Dendritic cell treated with granulocyte-macrophage colony-stimulating factor and Interleukin-4, amounts not matched to agents 40 ng/mL and 50 ng/mL, for 4 days (primary cell): ENCODE measurements at regions of chr10 and their contacts with region 1.

Region 1: GRCh38 chr10:13816195-13816926 is 229.6 kb downstream of the PRPF18 start:
- H3K4me3 Mint-ChIP-seq: no peak overlapping the region
- H3K27ac Mint-ChIP-seq: no peak overlapping the region
- H3K4me1 Mint-ChIP-seq: peaks cover 5% of the 10 kb centered on the region
- H3K27me3 Mint-ChIP-seq: peaks cover 57% of the 10 kb centered on the region

Region 2: DNA sequence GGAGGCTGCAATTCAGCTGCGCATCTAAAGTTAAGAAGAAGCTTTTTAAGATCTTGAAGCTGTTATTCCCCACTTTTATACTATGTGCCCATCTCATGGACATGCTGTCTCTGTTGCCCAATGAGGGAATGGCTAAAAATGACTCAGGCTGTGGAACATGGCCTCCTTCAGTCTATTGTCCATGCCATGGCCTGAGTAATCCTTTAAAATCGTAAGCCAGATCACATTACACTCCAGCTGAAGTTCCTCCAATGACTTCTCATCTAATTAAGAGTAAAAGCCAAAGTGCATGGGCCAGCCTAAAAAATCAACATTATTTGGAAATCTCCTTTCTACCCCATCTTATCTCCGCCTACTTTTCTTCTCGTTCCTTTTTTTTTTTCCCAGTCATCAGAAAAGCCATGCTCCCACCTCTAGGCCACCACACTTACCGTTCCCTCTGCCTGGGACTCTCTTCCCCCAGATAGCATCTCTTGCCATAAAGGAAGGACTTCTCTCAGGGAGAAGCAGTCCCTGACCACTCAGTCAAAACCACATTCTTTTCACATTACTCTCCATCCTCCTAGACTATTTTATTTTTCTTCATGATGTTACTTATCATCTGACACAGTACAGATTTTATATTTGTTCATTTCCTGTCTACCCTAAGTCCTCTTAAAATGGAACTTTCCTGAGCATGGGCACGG is 107.8 kb after region 1 on chr10:
- intact Hi-C with region 1: no loop called
- H3K4me3 Mint-ChIP-seq: no peak overlapping the region
- H3K27ac Mint-ChIP-seq: no peak overlapping the region
- H3K4me1 Mint-ChIP-seq: peaks cover 23% of the 10 kb centered on the region
- H3K27me3 Mint-ChIP-seq: peaks cover 62% of the 10 kb centered on the region

Region 3: DNA sequence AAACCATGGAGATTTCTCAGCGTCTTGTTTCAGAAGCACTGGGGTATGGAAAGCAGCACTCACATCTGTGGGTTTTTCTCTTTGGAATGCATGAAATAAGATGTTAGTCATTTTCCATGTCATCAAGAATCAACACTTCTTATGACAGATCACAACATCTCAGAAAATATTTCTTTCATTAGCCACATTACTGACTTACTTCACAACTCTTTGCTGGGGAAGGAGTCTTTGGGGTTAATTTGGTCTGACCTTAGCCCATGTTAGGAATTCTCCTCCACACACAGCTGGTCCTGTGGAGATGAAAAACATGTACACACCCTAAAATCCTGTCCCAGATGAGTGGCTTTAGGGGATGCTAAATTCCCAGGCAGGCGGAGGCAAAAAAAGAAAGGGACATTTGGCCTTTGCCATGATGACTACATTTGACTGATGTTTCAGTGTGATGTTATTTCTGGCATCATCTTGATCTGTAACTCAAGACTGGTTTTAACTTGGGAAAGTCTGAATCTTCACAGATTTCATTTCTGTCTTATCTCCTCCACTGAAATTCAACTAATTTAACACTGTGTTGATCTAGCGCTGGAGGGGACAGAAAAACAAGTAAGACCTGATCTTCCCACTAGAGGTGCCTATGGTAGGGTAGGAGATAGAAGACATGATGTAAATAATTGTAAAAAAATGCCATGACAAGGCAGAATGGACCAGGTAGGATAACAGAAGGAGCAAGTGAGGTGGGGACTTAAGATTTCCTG is 133.7 kb after region 1 on chr10:
- intact Hi-C with region 1: loop called (anchors 10 kb)
- H3K4me3 Mint-ChIP-seq: no peak overlapping the region
- H3K27ac Mint-ChIP-seq: no peak overlapping the region
- H3K4me1 Mint-ChIP-seq: peaks cover 8% of the 10 kb centered on the region
- H3K27me3 Mint-ChIP-seq: peaks cover 19% of the 10 kb centered on the region

Region 4: GRCh38 chr10:14084875-14085274 is 268.5 kb after region 1 on chr10:
- intact Hi-C with region 1: loop called (anchors 10 kb)
- H3K4me3 Mint-ChIP-seq: no peak overlapping the region
- H3K27ac Mint-ChIP-seq: no peak overlapping the region
- H3K4me1 Mint-ChIP-seq: no peaks in the 10 kb centered on the region
- H3K27me3 Mint-ChIP-seq: peaks cover 5% of the 10 kb centered on the region